CD4-positive, alpha-beta memory T cell (primary cell): ENCODE measurements at regions of chr6 and their contacts with region 1.

Region 1: GRCh38 chr6:110815217-110816109 is at the start of gene CDK19:
- DNase-seq: peak; percentile 99
- H3K4me3 ChIP-seq: peak within 1 kb of the TSS; percentile 85 to 91
- H3K4me3 Mint-ChIP-seq: peak within 1 kb of the TSS; percentile 95 to 100 (median 98)
- H3K27ac ChIP-seq: peak within 1 kb of the TSS; percentile 75
- H3K27ac Mint-ChIP-seq: peak within 1 kb of the TSS; percentile 98 to 100 (median 99)
- H3K4me1 ChIP-seq: peaks cover 26% of the 10 kb centered on the region
- H3K4me1 Mint-ChIP-seq: peaks cover 14 to 38% (median 20%) of the 10 kb centered on the region in 4 donors
- H3K27me3 ChIP-seq: no peaks in the 10 kb centered on the region
- H3K27me3 Mint-ChIP-seq: no peaks in the 10 kb centered on the region
- total RNA-seq, gene CDK19: 23.8 to 24.3 TPM

Region 2: GRCh38 chr6:109009236-109009961 is 1806.1 kb before region 1 on chr6:
- CTCF ChIA-PET with region 1: no interaction called
- POLR2A ChIA-PET with region 1: no interaction called
- intact Hi-C with region 1: loop called (anchors 5 kb)
- DNase-seq: peak; percentile 90 to 92 (median 90)
- H3K4me3 ChIP-seq: peak overlapping the region; percentile 77 to 86
- H3K4me3 Mint-ChIP-seq: peak overlapping the region; percentile 94 to 100 (median 98)
- H3K27ac ChIP-seq: peak overlapping the region; percentile 96
- H3K27ac Mint-ChIP-seq: peak overlapping the region; percentile 94 to 100 (median 100)
- H3K4me1 ChIP-seq: peaks cover 67% of the 10 kb centered on the region
- H3K4me1 Mint-ChIP-seq: peaks cover 47 to 81% (median 60%) of the 10 kb centered on the region in 4 donors
- H3K27me3 ChIP-seq: no peaks in the 10 kb centered on the region
- H3K27me3 Mint-ChIP-seq: no peaks in the 10 kb centered on the region

Region 3: DNA sequence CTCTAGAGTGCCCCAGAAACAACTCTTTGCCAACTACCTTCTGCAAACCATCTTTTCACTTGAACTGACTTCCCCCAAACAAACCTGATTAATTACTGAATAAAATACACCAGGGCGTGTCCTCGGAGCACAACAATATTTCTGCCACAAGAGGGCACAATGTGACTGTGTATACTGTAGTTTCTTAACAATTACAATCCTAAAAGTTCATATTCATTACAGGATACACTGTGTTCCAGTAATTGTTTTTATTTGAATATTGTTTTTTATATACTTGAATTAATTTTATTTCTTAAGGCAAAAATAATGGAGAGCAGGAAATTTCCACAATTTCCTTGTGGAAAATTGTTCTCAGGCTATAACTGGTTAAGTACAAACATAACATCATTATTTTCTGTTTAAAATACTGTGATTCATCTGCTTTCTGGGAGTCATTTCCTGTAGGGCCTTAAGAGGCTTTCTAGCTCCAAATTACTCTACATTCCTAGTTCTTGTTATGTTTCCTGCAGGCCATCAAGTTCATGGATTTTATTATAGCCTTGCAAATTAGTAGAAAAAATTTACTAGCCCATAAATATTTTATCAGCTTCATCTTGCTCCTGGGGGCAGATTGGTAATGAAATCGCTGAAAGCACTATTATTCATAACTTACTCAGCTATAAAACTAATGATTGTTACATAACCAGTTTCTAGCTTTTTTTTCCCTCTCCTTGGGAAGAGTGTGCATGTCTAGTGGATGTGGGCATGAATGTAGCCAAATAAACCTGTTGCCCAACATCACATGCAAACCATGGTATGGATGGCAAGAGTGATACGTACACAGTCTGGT is 287.1 kb before region 1 on chr6:
- CTCF ChIA-PET with region 1: no interaction called
- POLR2A ChIA-PET with region 1: no interaction called
- intact Hi-C with region 1: loop called (anchors 5 kb)
- DNase-seq: peak in 4 of 5 donors; percentile 57 to 61 (median 60)
- H3K4me3 ChIP-seq: no peak overlapping the region
- H3K4me3 Mint-ChIP-seq: no peak overlapping the region
- H3K27ac ChIP-seq: no peak overlapping the region
- H3K27ac Mint-ChIP-seq: no peak overlapping the region
- H3K4me1 ChIP-seq: no peaks in the 10 kb centered on the region
- H3K4me1 Mint-ChIP-seq: peaks cover 0 to 7% (median 3%) of the 10 kb centered on the region in 4 donors
- H3K27me3 ChIP-seq: no peaks in the 10 kb centered on the region
- H3K27me3 Mint-ChIP-seq: no peaks in the 10 kb centered on the region

Region 4: DNA sequence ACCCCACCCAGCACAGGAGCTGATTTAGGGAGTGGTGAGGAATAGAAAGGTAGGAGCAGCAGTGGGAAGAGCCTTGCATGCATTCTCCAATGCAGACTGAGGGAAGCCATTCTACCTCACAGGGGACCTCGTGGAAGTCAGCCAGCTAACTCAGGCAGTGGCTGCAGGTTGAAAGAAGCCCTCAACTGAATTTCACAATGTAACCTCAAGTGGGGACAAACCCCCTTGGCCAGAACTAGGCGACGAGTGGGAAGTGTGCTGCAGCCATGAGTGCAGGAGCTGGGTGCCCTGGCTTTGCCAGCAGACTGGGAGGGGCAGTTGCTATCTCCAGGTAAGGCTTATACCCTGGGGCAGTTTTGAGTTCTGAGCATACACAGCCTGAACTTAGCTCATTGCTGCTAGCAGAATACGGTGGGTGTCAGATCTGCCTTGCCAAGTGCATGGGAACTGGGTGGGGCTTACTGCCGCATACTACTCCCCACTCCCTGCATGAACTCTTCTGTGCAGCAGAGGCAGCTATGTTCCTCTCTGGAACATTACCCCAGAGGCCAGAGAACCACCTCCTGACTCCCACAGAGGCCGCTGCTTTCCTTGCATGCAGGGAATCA is 126.7 kb before region 1 on chr6:
- CTCF ChIA-PET with region 1: interaction called, 31 read pairs
- POLR2A ChIA-PET with region 1: interaction called, 22 read pairs
- intact Hi-C with region 1: no loop called
- DNase-seq: no peak
- H3K4me3 ChIP-seq: no peak overlapping the region
- H3K4me3 Mint-ChIP-seq: peak overlapping the region in 6 of 8 donors; percentile 24 to 76 (median 43)
- H3K27ac ChIP-seq: no peak overlapping the region
- H3K27ac Mint-ChIP-seq: peak overlapping the region; percentile 19 to 92 (median 74)
- H3K4me1 ChIP-seq: peaks cover 30% of the 10 kb centered on the region
- H3K4me1 Mint-ChIP-seq: peaks cover 22 to 50% (median 31%) of the 10 kb centered on the region in 4 donors
- H3K27me3 ChIP-seq: no peaks in the 10 kb centered on the region
- H3K27me3 Mint-ChIP-seq: no peaks in the 10 kb centered on the region

Region 5: GRCh38 chr6:110958329-110959192 is 143.1 kb after region 1 on chr6 and contains the start of gene GTF3C6:
- CTCF ChIA-PET with region 1: interaction called, 4 read pairs
- POLR2A ChIA-PET with region 1: interaction called, 44 read pairs
- intact Hi-C with region 1: loop called (anchors 1 kb)
- DNase-seq: peak; percentile 90 to 94 (median 92)
- H3K4me3 ChIP-seq: peak within 1 kb of the TSS; percentile 69 to 94
- H3K4me3 Mint-ChIP-seq: peak within 1 kb of the TSS; percentile 95 to 99 (median 98)
- H3K27ac ChIP-seq: peak within 1 kb of the TSS; percentile 82
- H3K27ac Mint-ChIP-seq: peak within 1 kb of the TSS; percentile 91 to 99 (median 98)
- H3K4me1 ChIP-seq: peaks cover 20% of the 10 kb centered on the region
- H3K4me1 Mint-ChIP-seq: peaks cover 11 to 26% (median 17%) of the 10 kb centered on the region in 4 donors
- H3K27me3 ChIP-seq: no peaks in the 10 kb centered on the region
- H3K27me3 Mint-ChIP-seq: no peaks in the 10 kb centered on the region
- total RNA-seq, gene GTF3C6: 28.9 to 35.7 TPM

Region 6: GRCh38 chr6:112087136-112087911 is 1271.9 kb after region 1 on chr6 and contains the starts of genes FAM229B and TUBE1:
- CTCF ChIA-PET with region 1: interaction called, 3 read pairs
- POLR2A ChIA-PET with region 1: no interaction called
- intact Hi-C with region 1: loop called (anchors 2 kb)
- DNase-seq: peak; percentile 89 to 97 (median 93)
- H3K4me3 ChIP-seq: peak within 1 kb of the TSS; percentile 31 to 80
- H3K4me3 Mint-ChIP-seq: no peak within 1 kb of the TSS
- H3K27ac ChIP-seq: peak within 1 kb of the TSS; percentile 78
- H3K27ac Mint-ChIP-seq: peak within 1 kb of the TSS in 1 of 7 donors; percentile 59
- H3K4me1 ChIP-seq: peaks cover 15% of the 10 kb centered on the region
- H3K4me1 Mint-ChIP-seq: peaks cover 6 to 15% (median 8%) of the 10 kb centered on the region in 4 donors
- H3K27me3 ChIP-seq: peaks cover 15% of the 10 kb centered on the region
- H3K27me3 Mint-ChIP-seq: peaks cover 13 to 17% of the 10 kb centered on the region in 2 donors
- total RNA-seq, gene FAM229B: 1.7 to 1.9 TPM
- total RNA-seq, gene TUBE1: 40.6 to 45.2 TPM